Mammary epithelial cell (primary cell): ENCODE measurements at regions of chr2 and their contacts with region 1.

Region 1: GRCh38 chr2:71798266-71799012 is 345.1 kb downstream of the DYSF start:
- DNase-seq: peak; percentile 22
- H3K4me3 ChIP-seq: no peak overlapping the region
- H3K27ac ChIP-seq: no peak overlapping the region
- H3K4me1 ChIP-seq: no peaks in the 10 kb centered on the region
- H3K27me3 ChIP-seq: no peaks in the 10 kb centered on the region
- CTCF ChIP-seq: peak; percentile 73 to 94

Region 2: DNA sequence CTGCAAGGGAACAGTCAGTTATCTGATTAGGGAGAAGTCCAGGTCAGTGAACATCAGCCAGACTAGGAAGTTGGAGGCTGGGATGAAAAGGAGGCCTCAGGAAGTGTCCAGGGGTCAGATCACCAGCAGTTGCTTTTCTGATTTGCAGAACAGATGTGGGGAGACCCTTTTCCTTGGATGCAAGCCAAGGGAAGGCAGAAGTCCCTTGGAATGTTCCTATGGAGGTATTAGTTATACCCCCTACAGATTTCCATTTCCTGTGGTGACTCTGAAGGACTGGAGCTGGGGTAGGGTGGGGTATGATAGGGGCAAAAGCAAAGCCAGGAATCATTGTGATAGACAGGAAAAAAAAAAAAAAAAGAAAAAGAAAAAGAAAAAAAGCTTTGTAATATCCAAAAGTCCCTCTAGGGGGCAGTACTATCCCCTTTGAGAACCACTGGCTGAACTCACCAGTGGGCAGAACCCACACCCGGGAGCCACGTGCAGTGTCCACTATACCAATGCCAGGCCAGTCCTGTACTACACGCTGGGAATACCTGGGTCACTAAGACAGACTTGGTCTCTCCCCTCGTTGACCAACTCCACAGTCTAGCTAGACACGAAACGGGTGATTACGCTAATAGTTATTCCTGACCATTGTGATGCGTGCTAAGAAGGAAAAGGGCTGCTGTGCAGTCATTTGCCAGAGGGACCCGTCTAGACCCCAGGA is 337.7 kb before region 1 on chr2:
- CTCF ChIA-PET with region 1: no interaction called
- dilution Hi-C with region 1: no loop called
- in situ Hi-C with region 1: no loop called
- intact Hi-C with region 1: loop called (anchors 1 kb)
- DNase-seq: no peak
- H3K4me3 ChIP-seq: no peak overlapping the region
- H3K27ac ChIP-seq: no peak overlapping the region
- H3K4me1 ChIP-seq: peaks cover 26% of the 10 kb centered on the region
- H3K27me3 ChIP-seq: no peaks in the 10 kb centered on the region
- CTCF ChIP-seq: peak; percentile 48 to 62

Region 3: DNA sequence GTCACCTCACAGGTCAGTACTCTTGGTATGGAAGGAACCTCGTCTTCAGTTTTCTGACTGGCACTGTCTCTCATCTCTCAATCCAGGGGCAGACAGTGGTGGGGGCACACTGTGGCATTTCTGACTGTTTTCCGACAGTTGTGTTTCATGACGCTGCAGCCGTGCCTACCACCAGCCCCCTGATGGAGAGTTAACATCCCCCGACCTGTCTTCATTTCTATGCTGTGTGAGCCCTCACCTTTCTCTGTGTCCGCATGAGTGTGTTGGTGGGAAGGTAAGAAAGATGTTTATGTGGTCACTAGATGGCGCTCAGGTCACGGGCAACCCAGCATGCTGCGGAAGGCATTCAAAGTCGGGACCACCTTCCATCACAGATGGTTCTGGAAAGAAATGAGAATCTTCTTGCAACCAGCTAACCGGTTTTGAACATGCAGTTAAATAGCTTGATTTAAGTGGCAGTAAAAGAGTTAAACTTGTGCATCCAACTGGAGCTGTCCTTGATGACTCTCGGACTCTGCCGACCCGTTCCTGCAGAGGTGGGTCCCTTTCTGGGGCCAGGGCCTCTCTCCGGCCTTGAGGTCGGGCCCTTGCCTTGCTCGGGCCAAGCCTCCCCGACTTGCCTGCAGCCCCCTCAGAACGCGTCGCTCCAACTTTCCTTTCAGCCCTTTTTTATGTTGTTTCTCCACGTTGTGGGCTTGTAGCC is 252.7 kb before region 1 on chr2:
- CTCF ChIA-PET with region 1: no interaction called
- dilution Hi-C with region 1: no loop called
- in situ Hi-C with region 1: loop called in 1 of 2 experiments (anchors 5 kb)
- intact Hi-C with region 1: loop called (anchors 1 kb)
- DNase-seq: peak; percentile 30
- H3K4me3 ChIP-seq: no peak overlapping the region
- H3K27ac ChIP-seq: no peak overlapping the region
- H3K4me1 ChIP-seq: peaks cover 4% of the 10 kb centered on the region
- H3K27me3 ChIP-seq: no peaks in the 10 kb centered on the region
- CTCF ChIP-seq: peak; percentile 71 to 87

Region 4: GRCh38 chr2:71711133-71711855 is 87.1 kb before region 1 on chr2:
- CTCF ChIA-PET with region 1: no interaction called
- dilution Hi-C with region 1: loop called (anchors 5 kb)
- in situ Hi-C with region 1: no loop called
- intact Hi-C with region 1: no loop called
- DNase-seq: peak; percentile 3
- H3K4me3 ChIP-seq: no peak overlapping the region
- H3K27ac ChIP-seq: no peak overlapping the region
- H3K4me1 ChIP-seq: no peaks in the 10 kb centered on the region
- H3K27me3 ChIP-seq: no peaks in the 10 kb centered on the region
- CTCF ChIP-seq: no peak

Region 5: GRCh38 chr2:71846669-71847291 is 48.3 kb after region 1 on chr2:
- CTCF ChIA-PET with region 1: no interaction called
- dilution Hi-C with region 1: loop called (anchors 5 kb)
- in situ Hi-C with region 1: no loop called
- intact Hi-C with region 1: no loop called
- DNase-seq: peak; percentile 29
- H3K4me3 ChIP-seq: no peak overlapping the region
- H3K27ac ChIP-seq: no peak overlapping the region
- H3K4me1 ChIP-seq: peaks cover 9% of the 10 kb centered on the region
- H3K27me3 ChIP-seq: no peaks in the 10 kb centered on the region
- CTCF ChIP-seq: no peak

Region 6: GRCh38 chr2:71923887-71924533 is 125.6 kb after region 1 on chr2:
- CTCF ChIA-PET with region 1: no interaction called
- dilution Hi-C with region 1: no loop called
- in situ Hi-C with region 1: no loop called
- intact Hi-C with region 1: loop called (anchors 1 kb)
- DNase-seq: peak; percentile 56
- H3K4me3 ChIP-seq: no peak overlapping the region
- H3K27ac ChIP-seq: no peak overlapping the region
- H3K4me1 ChIP-seq: no peaks in the 10 kb centered on the region
- H3K27me3 ChIP-seq: no peaks in the 10 kb centered on the region
- CTCF ChIP-seq: peak; percentile 81 to 89

Region 7: DNA sequence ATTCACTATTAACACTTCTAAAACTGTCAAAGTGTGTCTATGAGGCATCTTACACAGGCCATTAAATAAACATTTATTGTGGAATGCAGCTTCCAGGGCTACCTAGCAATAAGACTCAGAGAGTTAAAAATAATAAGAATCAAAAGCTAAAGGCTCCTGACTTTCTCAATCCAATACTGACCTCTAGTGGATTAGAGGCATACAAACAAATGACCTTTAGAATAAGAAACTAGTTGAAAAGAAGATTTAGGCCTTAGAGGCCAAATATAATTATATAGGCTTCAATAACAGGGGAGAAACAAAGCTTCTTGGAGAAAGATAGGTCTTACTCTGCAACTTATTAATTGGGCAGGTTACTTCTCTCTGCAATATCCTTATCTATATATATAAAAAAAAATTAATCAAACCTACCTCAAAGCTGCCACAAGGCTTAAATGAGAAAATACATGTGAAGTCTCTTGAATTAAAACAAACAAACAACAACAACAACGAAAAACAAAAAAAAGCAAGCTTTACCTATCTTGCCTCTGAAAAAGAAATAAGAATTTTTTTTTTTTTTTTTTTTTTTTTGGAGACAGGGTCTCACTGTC is 781.2 kb after region 1 on chr2:
- CTCF ChIA-PET with region 1: no interaction called
- dilution Hi-C with region 1: no loop called
- in situ Hi-C with region 1: no loop called
- intact Hi-C with region 1: loop called (anchors 10 kb)
- DNase-seq: peak; percentile 28
- H3K4me3 ChIP-seq: no peak overlapping the region
- H3K27ac ChIP-seq: no peak overlapping the region
- H3K4me1 ChIP-seq: no peaks in the 10 kb centered on the region
- H3K27me3 ChIP-seq: no peaks in the 10 kb centered on the region
- CTCF ChIP-seq: peak; percentile 52 to 60